A549 (cell line): ENCODE measurements at regions of chr12 and their contacts with region 1.

Region 1: DNA sequence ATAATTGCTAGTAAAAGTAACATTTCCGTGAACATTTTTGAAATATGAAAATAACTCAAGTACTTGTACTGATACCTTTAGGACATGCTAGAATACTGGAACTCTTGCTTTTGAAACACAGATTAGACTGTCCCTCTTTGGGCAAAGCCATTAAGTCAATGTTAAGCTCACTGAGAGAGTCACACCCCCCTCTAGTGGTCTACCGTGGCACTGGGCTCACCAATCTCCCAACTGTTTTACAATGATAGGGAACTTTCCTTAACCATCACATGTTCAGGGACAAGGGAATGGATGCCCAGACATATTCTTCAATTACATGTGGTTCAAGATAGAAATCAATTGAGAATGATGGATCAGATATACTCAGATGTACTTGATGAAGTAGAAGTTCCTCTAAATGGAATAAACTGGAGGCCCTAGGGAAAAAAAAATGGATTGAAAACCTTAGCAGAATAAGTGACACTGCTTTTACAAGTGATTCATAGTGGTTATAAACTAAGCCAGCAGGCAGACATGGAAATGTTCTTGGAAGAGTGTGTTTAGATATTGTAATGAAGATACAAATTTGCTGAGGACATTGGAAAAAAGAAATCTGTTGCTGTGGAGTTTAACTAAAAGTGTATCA is 17.8 kb downstream of the NANOG start:
- DNase-seq: peak; percentile 75 to 78
- ATAC-seq: peak; percentile 98
- H3K4me3 ChIP-seq: no peak overlapping the region
- H3K27ac ChIP-seq: no peak overlapping the region
- H3K4me1 ChIP-seq: no peaks in the 10 kb centered on the region
- CTCF ChIP-seq: peak; percentile 87
- EP300 ChIP-seq: no peak
- POLR2A ChIP-seq: no peak
- RAD21 ChIP-seq: peak; percentile 81 to 88

Region 2: DNA sequence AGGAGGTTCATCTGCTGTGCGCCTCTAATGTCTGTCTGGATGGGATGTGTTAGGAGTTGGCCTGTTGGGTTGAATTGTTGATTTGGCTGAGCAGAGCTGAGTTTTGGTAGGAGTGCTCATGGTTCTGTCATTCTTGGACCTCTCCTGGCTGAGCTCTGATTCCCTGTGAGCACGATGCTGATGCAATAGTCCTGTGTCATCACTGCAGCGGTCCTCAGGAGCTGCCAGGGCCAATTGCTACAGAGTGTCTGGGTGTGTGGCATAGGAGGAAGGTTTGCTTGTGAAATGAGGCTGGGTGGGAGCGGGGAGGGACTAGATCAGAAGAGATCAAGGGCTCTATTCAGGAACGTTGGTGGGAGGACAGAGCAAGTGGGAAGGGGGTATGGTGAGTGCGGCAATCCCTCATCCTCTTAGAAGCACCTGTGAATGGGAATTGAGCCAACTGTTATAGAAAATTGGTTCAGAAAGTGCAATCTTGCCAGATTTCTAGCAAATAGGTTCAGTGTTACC is 596.3 kb before region 1 on chr12:
- CTCF ChIA-PET with region 1: no interaction called
- POLR2A ChIA-PET with region 1: interaction called, 10 read pairs
- DNase-seq: no peak
- ATAC-seq: no peak
- H3K4me3 ChIP-seq: no peak overlapping the region
- H3K27ac ChIP-seq: no peak overlapping the region
- H3K4me1 ChIP-seq: no peaks in the 10 kb centered on the region
- CTCF ChIP-seq: no peak
- EP300 ChIP-seq: no peak
- POLR2A ChIP-seq: no peak
- RAD21 ChIP-seq: no peak

Region 3: DNA sequence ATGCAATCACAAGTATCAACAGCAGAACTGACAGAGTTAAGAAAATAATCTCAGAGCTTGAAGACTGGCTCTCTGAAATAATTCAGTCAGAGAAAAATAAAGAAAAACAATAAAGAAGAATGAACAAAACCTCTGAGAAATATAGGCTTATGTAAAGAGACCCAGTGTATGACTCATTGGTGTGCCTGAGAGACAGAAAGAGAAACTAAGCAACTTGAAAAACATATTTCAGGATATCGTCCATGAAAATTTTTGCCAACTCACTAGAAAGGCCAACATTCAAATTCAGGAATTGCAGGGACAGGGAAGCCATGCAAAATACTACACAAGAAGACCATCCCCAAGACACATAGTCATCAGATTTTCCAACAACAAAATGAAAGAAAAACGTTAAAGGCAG is 197.5 kb before region 1 on chr12:
- CTCF ChIA-PET with region 1: no interaction called
- POLR2A ChIA-PET with region 1: no interaction called
- DNase-seq: no peak
- ATAC-seq: no peak
- H3K4me3 ChIP-seq: no peak overlapping the region
- H3K27ac ChIP-seq: no peak overlapping the region
- H3K4me1 ChIP-seq: no peaks in the 10 kb centered on the region
- CTCF ChIP-seq: no peak
- EP300 ChIP-seq: no peak
- POLR2A ChIP-seq: no peak
- RAD21 ChIP-seq: no peak

Region 4: GRCh38 chr12:7678738-7679137 is 128.2 kb before region 1 on chr12:
- CTCF ChIA-PET with region 1: interaction called, 85 read pairs
- POLR2A ChIA-PET with region 1: no interaction called
- DNase-seq: peak in 1 of 2 experiments; percentile 33
- ATAC-seq: peak; percentile 54 to 60; a peak in 3 of 6 replicates
- H3K4me3 ChIP-seq: no peak overlapping the region
- H3K27ac ChIP-seq: no peak overlapping the region
- H3K4me1 ChIP-seq: no peaks in the 10 kb centered on the region
- CTCF ChIP-seq: no peak
- EP300 ChIP-seq: no peak
- POLR2A ChIP-seq: no peak
- RAD21 ChIP-seq: no peak

Region 5: DNA sequence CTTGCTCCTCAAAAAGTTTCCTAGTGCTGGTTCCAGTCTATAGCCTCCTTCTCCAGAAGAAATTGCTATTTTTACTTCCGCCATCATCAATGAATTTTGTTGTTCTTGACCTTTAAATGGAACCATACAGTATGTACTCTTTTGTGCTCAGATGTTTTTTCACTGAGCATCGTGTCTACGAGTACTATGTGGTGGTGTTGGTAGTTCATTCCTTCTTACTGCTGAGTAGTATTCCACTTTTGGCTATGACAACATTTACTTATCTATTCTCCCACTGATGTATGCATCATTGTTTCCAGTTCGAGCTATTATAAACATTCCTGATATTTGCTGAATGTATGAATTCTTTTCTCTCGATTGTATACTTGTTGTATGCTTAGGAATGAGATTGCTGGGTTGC is 37.1 kb after region 1 on chr12:
- CTCF ChIA-PET with region 1: no interaction called
- POLR2A ChIA-PET with region 1: no interaction called
- DNase-seq: no peak
- ATAC-seq: no peak
- H3K4me3 ChIP-seq: no peak overlapping the region
- H3K27ac ChIP-seq: no peak overlapping the region
- H3K4me1 ChIP-seq: no peaks in the 10 kb centered on the region
- CTCF ChIP-seq: no peak
- EP300 ChIP-seq: no peak
- POLR2A ChIP-seq: no peak
- RAD21 ChIP-seq: no peak

Region 6: DNA sequence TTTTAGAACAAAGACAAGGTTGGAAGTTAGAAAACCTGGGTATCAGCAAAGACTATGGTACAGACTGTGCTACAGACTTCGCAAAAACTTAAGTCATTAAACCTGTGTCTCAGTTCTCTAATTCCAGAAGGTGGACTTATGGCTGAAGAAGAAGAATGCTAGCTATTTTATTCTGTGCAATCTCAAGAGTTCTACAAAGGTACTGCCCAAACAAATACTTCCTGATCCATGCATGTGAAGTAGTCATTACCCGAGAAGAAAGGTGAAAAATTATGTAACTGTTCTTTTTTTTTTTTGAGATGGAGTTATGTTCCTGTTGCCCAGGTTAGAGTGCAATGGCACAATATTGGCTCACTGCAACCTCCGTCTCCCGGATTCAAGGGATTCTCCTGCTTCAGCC is 174.5 kb after region 1 on chr12:
- CTCF ChIA-PET with region 1: no interaction called
- POLR2A ChIA-PET with region 1: no interaction called
- DNase-seq: no peak
- ATAC-seq: no peak
- H3K4me3 ChIP-seq: no peak overlapping the region
- H3K27ac ChIP-seq: peak overlapping the region in 1 of 2 experiments; percentile 59; a peak in 2 of 6 replicates
- H3K4me1 ChIP-seq: peaks cover 24% of the 10 kb centered on the region
- CTCF ChIP-seq: no peak
- EP300 ChIP-seq: no peak
- POLR2A ChIP-seq: no peak
- RAD21 ChIP-seq: no peak